ENCODE measurements at regions of chr10 and their contacts with region 1.

Region 1: GRCh38 chr10:36534471-36535002 is 590.9 kb upstream of the ANKRD30A start:
- DNase-seq: peak; percentile 100
- ATAC-seq: peak; percentile 82
- H3K4me3 ChIP-seq: no peak overlapping the region
- H3K27ac ChIP-seq: peak overlapping the region; percentile 83
- H3K4me1 ChIP-seq: peaks cover 63% of the 10 kb centered on the region
- H3K27me3 ChIP-seq: no peaks in the 10 kb centered on the region
- CTCF ChIP-seq: no peak

Region 2: GRCh38 chr10:35642027-35642792 is 892.3 kb before region 1 on chr10 and contains the start of gene FZD8:
- CTCF ChIA-PET with region 1: no interaction called
- POLR2A ChIA-PET with region 1: interaction called, 3 read pairs
- intact Hi-C with region 1: loop called (anchors 1 kb)
- DNase-seq: peak; percentile 100
- ATAC-seq: peak; percentile 73
- H3K4me3 ChIP-seq: peak within 1 kb of the TSS; percentile 80
- H3K27ac ChIP-seq: peak within 1 kb of the TSS; percentile 62
- H3K4me1 ChIP-seq: peaks cover 30% of the 10 kb centered on the region
- H3K27me3 ChIP-seq: no peaks in the 10 kb centered on the region
- CTCF ChIP-seq: peak; percentile 60; the same call in 1 of the 2 replicates
- total RNA-seq, gene FZD8: 275 and 375 TPM in 2 replicates

Region 3: GRCh38 chr10:36096571-36096970 is 438.0 kb before region 1 on chr10:
- CTCF ChIA-PET with region 1: no interaction called
- POLR2A ChIA-PET with region 1: no interaction called
- intact Hi-C with region 1: loop called (anchors 2 kb)
- DNase-seq: peak; percentile 97
- ATAC-seq: peak; percentile 71
- H3K4me3 ChIP-seq: no peak overlapping the region
- H3K27ac ChIP-seq: peak overlapping the region; percentile 58
- H3K4me1 ChIP-seq: peaks cover 29% of the 10 kb centered on the region
- H3K27me3 ChIP-seq: no peaks in the 10 kb centered on the region
- CTCF ChIP-seq: no peak

Region 4: GRCh38 chr10:36366843-36367242 is 167.7 kb before region 1 on chr10:
- CTCF ChIA-PET with region 1: no interaction called
- POLR2A ChIA-PET with region 1: no interaction called
- intact Hi-C with region 1: no loop called
- DNase-seq: no peak
- ATAC-seq: no peak
- H3K4me3 ChIP-seq: no peak overlapping the region
- H3K27ac ChIP-seq: no peak overlapping the region
- H3K4me1 ChIP-seq: 0 out of 2 replicates have a peak, but pooled peaks cover 3% of the 10 kb centered on the region
- H3K27me3 ChIP-seq: no peaks in the 10 kb centered on the region
- CTCF ChIP-seq: no peak

Region 5: GRCh38 chr10:36393801-36394200 is 140.7 kb before region 1 on chr10:
- CTCF ChIA-PET with region 1: no interaction called
- POLR2A ChIA-PET with region 1: no interaction called
- intact Hi-C with region 1: loop called (anchors 1 kb)
- DNase-seq: peak; percentile 99
- ATAC-seq: peak; percentile 88
- H3K4me3 ChIP-seq: no peak overlapping the region
- H3K27ac ChIP-seq: peak overlapping the region; percentile 21
- H3K4me1 ChIP-seq: peaks cover 13% of the 10 kb centered on the region
- H3K27me3 ChIP-seq: no peaks in the 10 kb centered on the region
- CTCF ChIP-seq: no peak

Region 6: GRCh38 chr10:36515319-36515718 is 19.2 kb before region 1 on chr10:
- CTCF ChIA-PET with region 1: interaction called, 3 read pairs
- POLR2A ChIA-PET with region 1: no interaction called
- intact Hi-C with region 1: loop called (anchors 1 kb)
- DNase-seq: no peak
- ATAC-seq: peak; percentile 32
- H3K4me3 ChIP-seq: no peak overlapping the region
- H3K27ac ChIP-seq: peak overlapping the region; percentile 40; the same call in 1 of the 2 replicates
- H3K4me1 ChIP-seq: peaks cover 30% of the 10 kb centered on the region
- H3K27me3 ChIP-seq: no peaks in the 10 kb centered on the region
- CTCF ChIP-seq: no peak

Region 7: GRCh38 chr10:36671607-36672006 is 137.1 kb after region 1 on chr10:
- CTCF ChIA-PET with region 1: interaction called, 3 read pairs
- POLR2A ChIA-PET with region 1: no interaction called
- intact Hi-C with region 1: loop called (anchors 1 kb)
- DNase-seq: peak; percentile 99
- ATAC-seq: peak; percentile 66
- H3K4me3 ChIP-seq: peak overlapping the region; percentile 26; the same call in 1 of the 2 replicates
- H3K27ac ChIP-seq: peak overlapping the region; percentile 70
- H3K4me1 ChIP-seq: peaks cover 46% of the 10 kb centered on the region
- H3K27me3 ChIP-seq: no peaks in the 10 kb centered on the region
- CTCF ChIP-seq: no peak

Region 8: GRCh38 chr10:36880898-36881297 is 346.4 kb after region 1 on chr10:
- CTCF ChIA-PET with region 1: interaction called, 4 read pairs
- POLR2A ChIA-PET with region 1: no interaction called
- intact Hi-C with region 1: loop called (anchors 2 kb)
- DNase-seq: peak; percentile 93
- ATAC-seq: peak; percentile 86
- H3K4me3 ChIP-seq: no peak overlapping the region
- H3K27ac ChIP-seq: no peak overlapping the region
- H3K4me1 ChIP-seq: no peaks in the 10 kb centered on the region
- H3K27me3 ChIP-seq: 0 out of 2 replicates have a peak, but pooled peaks cover 3% of the 10 kb centered on the region
- CTCF ChIP-seq: peak; percentile 86

Measured in PC-3 (cell line).